Aorta (tissue), 5 donors: ENCODE measurements at regions of chr16 and their contacts with region 1.

Region 1: DNA sequence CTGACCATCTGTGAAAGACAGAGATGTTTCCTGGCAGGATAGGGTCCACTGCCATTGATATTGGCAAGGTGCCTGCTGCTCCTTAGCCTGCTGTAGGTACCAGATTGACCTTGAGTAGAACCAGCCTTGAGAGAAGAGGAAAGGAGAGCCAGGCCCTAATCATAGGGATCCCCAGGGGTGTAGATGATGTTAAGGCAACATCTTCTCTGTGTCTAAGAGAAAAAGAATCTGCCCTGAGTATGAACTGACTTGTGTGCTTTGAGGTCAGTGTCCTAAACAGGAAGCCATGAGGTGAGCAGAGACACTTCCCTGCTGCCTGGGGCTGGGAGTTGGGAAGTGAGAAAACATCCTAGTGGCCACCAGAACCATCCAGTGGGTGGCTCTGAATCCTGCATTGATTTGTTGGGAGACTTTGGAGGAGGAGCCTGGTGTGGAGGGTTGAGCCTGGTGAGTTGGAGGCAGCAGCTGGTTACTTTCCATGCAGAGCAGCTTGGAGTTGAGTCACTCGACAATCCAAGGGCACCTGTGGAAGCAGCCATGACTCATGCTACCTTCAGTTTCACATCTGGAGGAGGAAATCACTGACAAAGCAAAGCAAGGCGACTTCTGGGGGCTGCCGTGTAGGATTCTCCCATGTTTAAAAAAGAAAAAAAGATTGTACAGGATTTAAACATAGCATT is 47.8 kb downstream of the BMERB1 start:
- DNase-seq: peak in 1 of 2 donors; percentile 58
- ATAC-seq: peak; percentile 73
- H3K4me3 ChIP-seq: no peak overlapping the region
- H3K27ac ChIP-seq: no peak overlapping the region
- H3K4me1 ChIP-seq: no peaks in the 10 kb centered on the region
- H3K27me3 ChIP-seq: no peaks in the 10 kb centered on the region

Region 2: DNA sequence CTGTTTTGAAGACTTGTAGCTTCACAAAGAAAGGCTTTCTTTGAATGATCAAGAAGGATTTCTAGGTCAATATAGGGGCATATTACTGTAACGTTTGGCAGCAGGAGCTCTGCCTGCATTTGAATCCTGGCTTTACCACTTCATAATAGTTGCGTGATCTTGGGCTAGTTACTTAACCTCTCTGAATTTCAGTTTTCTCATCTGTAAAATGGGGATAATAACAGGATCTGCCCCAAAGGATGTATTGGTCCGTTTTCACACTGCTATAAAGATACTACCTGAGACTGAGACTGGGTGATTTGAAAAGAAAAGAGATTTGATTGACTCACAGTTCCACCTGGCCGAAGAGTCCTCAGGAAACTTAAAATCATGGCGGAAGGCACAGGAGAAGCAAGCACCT is 35.3 kb before region 1 on chr16:
- intact Hi-C with region 1: loop called in 1 of 2 experiments (anchors 5 kb)
- DNase-seq: no peak
- ATAC-seq: no peak
- H3K4me3 ChIP-seq: no peak overlapping the region
- H3K27ac ChIP-seq: no peak overlapping the region
- H3K4me1 ChIP-seq: no peaks in the 10 kb centered on the region
- H3K27me3 ChIP-seq: no peaks in the 10 kb centered on the region